Lower leg skin (tissue), 4 donors: ENCODE measurements at regions of chr6 and their contacts with region 1.

Region 1: DNA sequence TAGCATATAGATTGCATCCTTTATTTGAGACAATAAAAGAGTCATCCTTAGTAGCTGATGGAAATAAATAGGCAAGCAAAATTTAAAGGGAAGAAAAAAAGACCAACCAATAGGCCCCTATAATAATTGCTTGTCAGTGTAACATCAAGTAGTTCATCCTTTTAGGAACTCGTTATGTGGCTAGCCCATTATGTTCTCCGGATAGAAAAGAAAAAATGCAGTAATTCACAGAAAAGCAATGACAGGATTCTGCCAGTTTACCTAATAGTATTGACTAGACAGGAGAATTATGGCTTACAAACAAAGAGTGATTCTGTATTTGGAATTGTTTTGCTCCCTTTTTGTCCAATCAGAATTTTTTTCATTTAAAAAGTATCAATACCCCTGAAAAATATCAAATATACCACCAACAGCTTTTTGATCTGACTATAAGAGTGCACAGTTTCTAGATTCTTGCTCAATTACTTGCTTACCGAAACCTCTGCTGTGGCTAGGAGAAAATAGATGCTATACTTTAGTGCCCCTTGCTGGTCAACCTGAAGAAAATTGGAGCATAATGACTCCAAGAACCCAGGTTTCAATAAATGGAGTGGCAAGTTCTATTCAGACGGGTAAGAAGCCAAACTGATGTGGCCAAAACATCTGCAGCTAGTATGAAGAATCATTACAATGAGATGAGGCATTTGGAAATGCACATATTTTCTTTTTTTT is 91.5 kb upstream of the SASH1 start:
- DNase-seq: no peak
- H3K4me3 ChIP-seq: no peak overlapping the region
- CTCF ChIP-seq: no peak
- POLR2A ChIP-seq: no peak

Region 2: DNA sequence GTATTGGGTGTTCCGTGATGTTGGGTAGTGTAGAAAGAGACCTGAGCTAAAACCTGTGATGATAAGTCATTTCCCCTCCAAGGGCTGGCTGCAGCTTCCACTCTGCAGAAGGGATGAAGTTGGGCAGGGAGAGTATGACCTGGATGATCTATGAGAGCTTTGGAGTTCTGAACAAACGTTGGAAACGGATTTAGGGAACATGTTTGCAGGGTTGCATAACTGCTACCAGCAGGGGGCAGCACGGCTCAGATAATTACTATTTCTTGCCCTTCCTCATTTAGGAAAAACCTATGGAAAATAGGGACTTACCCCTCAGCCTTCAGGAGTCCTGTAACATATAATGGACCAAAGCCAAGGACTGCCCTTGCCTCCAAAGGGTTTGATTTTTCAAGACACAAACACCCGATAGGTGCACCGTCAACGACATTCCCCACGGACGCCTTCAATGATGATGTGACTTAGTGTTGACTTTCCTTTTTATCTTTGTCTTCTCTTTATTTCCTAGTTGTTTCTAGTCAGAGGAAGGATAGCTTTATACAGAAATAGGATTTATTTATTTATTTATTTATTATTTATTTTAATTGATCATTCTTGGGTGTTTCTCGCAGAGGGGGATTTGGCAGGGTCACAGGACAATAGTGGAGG is 73.4 kb before region 1 on chr6:
- intact Hi-C with region 1: loop called (anchors 2 kb)
- DNase-seq: peak; percentile 60 to 91
- H3K4me3 ChIP-seq: no peak overlapping the region
- CTCF ChIP-seq: peak in 1 of 3 donors; percentile 84
- POLR2A ChIP-seq: no peak

Region 3: DNA sequence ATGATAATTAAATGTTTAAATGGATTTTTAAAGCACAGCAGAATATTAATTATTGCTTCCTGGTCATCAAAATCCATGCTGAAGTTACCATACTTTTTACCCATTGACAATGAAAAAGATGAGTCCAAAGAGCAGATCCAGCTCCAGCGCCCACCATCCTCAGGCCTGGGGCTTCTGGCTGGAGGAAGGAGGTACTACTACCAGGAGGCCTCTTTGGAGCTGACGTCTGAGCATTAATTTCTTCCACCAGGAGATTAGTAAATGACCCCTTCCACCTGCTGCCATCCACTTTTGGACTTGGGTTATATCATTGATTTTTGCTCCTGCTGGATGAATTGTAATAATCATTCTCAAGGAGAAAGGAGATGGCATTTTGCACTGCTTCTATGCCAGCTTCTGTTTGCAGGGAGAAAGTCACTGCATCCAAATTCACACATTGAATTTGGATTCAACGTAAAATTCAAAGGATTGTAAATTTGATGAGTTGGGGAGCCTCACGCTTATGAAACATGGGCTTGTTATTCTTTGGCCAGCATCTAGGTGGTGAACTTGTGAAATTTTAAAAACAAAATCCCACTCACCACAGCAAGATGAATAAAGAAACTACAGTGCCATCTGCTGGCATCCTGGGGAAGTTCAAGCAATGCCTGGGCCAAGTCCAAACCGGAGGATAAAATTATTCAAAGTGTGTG is 213.3 kb after region 1 on chr6:
- intact Hi-C with region 1: loop called (anchors 10 kb)
- DNase-seq: peak; percentile 75 to 95
- H3K4me3 ChIP-seq: no peak overlapping the region
- CTCF ChIP-seq: peak in 1 of 3 donors; percentile 75
- POLR2A ChIP-seq: no peak